Calu3 (cell line): ENCODE measurements at regions of chr1 and their contacts with region 1.

Region 1: DNA sequence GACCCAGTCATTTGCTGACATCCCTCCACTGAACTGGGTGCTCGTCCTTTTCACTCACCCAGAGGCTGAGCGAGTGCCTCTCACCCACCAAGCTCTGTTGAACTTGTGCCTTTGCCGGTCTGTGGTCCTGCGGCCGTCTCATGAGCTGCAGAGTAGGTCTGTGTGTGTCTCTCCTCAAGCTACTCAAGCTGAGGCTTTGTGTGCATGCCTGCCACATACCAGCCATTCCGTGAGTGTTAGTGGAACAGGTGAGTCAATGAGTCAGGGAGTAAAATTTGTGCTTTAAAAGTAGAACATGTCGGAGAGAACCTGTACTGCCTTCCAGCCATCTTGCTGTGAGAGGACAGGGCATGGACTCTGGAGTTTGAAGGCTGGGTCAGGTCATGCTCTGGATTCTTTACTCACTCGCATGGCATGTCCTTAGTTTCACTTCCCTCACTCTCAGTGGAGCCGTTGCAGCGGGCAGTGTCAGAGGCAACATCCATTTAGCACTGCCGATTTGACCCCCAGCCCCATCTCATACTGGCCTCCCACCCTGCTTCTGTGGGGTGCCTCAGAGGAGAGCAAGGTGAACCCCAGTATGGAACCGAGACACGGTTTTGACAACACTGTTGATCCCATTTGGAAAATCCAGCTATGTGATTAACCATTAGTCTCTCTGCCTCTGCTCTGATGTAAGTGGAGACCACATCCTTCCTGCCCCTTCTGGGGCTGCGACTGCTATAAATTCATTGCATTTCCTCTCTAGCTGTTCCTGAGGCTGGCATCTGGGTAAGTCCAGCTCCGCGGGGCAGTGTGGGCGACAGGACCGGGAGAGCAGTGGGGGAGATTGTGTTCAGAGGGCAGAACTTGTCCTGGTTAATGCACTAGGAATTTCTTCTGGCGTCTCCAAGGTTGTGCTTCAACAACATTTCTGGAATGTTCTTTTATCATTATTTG is at the start of gene NLRP3:
- DNase-seq: peak; percentile 13
- H3K4me3 Mint-ChIP-seq: peak within 1 kb of the TSS; percentile 35
- H3K27ac Mint-ChIP-seq: no peak within 1 kb of the TSS
- H3K4me1 Mint-ChIP-seq: peaks cover 8% of the 10 kb centered on the region
- H3K27me3 Mint-ChIP-seq: no peaks in the 10 kb centered on the region
- CTCF ChIP-seq: no peak
- total RNA-seq, gene NLRP3: 0.26 and 0.32 TPM in 2 replicates

Region 2: DNA sequence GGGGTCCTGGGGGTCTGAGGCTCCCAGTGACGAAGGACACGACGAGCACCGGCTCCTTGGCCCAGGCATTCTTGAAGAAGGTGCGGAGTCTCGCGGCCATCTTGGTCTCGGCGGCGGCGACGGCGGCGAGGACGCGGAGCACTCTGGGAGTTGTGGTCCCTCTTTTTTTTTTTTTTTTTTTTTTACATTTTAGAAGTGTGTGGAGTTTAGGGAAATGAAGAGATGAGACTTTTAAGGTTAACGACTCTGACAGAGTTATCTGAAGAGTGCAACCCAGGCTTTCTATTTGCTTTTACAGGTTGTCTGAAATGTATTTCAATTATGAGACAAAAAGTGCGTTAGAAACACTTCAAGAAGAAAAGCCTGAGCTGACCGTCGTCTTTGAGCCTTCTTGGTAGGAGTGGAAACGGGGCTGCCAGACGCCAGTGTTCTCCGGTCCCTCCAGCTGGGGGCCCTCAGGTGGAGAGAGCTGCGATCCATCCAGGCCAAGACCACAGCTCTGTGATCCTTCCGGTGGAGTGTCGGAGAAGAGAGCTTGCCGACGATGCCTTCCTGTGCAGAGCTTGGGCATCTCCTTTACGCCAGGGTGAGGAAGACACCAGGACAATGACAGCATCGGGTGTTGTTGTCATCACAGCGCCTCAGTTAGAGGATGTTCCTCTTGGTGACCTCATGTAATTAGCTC is 32.6 kb after region 1 on chr1:
- CTCF ChIA-PET with region 1: interaction called, 10 read pairs
- intact Hi-C with region 1: no loop called
- DNase-seq: peak; percentile 71
- H3K4me3 Mint-ChIP-seq: peak overlapping the region; percentile 61
- H3K27ac Mint-ChIP-seq: no peak overlapping the region
- H3K4me1 Mint-ChIP-seq: no peaks in the 10 kb centered on the region
- H3K27me3 Mint-ChIP-seq: no peaks in the 10 kb centered on the region
- CTCF ChIP-seq: no peak

Region 3: DNA sequence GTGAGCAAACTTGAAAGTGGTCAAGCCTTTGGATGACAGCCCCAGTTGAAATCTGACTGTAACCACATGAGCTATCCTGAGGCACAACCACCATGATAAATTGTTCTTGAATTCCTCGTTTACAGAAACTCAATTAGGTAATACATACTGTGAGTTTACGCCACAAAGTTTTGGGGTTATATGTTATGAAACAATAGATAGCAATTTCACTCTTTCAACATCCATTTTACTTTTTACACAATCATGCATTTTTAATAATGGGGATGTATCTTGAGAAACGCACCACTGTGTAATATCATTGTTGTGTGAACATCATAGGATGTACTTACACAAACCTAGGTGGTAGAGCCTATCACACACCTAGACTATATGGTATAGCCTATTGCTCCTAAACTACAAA is 85.2 kb after region 1 on chr1:
- CTCF ChIA-PET with region 1: no interaction called
- intact Hi-C with region 1: no loop called
- DNase-seq: no peak
- H3K4me3 Mint-ChIP-seq: no peak overlapping the region
- H3K27ac Mint-ChIP-seq: no peak overlapping the region
- H3K4me1 Mint-ChIP-seq: no peaks in the 10 kb centered on the region
- H3K27me3 Mint-ChIP-seq: no peaks in the 10 kb centered on the region
- CTCF ChIP-seq: no peak